Mammary epithelial cell (primary cell): ENCODE measurements at regions of chr13 and their contacts with region 1.

Region 1: DNA sequence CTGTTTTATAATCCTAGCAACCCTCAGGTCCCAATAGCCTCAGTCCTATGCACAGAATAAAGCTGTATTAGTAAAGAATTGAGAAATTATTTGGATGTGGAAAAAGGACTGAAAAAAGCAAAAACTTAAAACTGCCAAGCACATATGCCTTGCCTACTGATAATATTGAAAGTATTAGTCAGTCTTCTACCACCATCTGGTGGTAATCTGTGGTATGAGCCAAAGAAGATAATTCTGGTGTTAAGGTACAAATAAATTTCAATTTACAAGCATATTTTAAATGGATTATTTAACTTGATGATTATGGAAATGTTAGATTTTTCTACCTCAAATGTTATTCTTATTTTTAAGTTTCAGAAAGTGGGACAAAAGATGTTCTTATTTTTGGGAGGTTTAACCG is 460.3 kb upstream of the KLHL1 start:
- DNase-seq: peak; percentile 11
- H3K4me3 ChIP-seq: no peak overlapping the region
- H3K27ac ChIP-seq: no peak overlapping the region
- H3K4me1 ChIP-seq: no peaks in the 10 kb centered on the region
- H3K27me3 ChIP-seq: no peaks in the 10 kb centered on the region
- CTCF ChIP-seq: peak; percentile 67 to 68

Region 2: GRCh38 chr13:69579351-69579750 is 989.2 kb before region 1 on chr13:
- CTCF ChIA-PET with region 1: no interaction called
- dilution Hi-C with region 1: no loop called
- in situ Hi-C with region 1: no loop called
- intact Hi-C with region 1: loop called (anchors 5 kb)
- DNase-seq: peak; percentile 3
- H3K4me3 ChIP-seq: no peak overlapping the region
- H3K27ac ChIP-seq: peak overlapping the region; percentile 47
- H3K4me1 ChIP-seq: peaks cover 4% of the 10 kb centered on the region
- H3K27me3 ChIP-seq: no peaks in the 10 kb centered on the region
- CTCF ChIP-seq: peak; percentile 9 to 42

Region 3: GRCh38 chr13:70098669-70099068 is 469.9 kb before region 1 on chr13:
- CTCF ChIA-PET with region 1: no interaction called
- dilution Hi-C with region 1: no loop called
- in situ Hi-C with region 1: no loop called
- intact Hi-C with region 1: loop called (anchors 5 kb)
- DNase-seq: no peak
- H3K4me3 ChIP-seq: no peak overlapping the region
- H3K27ac ChIP-seq: no peak overlapping the region
- H3K4me1 ChIP-seq: no peaks in the 10 kb centered on the region
- H3K27me3 ChIP-seq: peaks cover 3% of the 10 kb centered on the region
- CTCF ChIP-seq: peak; percentile 32 to 56

Region 4: DNA sequence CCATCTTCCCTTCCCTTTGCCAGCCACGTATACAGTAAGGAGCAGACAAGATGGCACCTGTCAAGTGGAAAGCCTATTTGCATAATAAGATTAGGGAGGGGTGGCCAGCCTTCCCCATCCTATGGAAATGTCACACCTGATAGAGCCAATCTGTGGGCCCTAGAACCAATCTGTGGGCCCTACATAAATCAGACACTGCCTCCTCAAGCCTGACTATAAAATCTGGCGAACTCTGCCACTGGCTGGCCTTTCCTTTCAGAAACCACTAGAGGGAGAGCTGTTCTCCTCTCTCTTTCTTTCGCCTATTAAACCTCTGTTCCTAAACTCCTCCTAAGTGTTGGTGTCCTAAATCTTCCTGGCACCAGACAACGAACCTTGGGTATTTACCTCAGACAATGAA is 228.8 kb before region 1 on chr13:
- CTCF ChIA-PET with region 1: no interaction called
- dilution Hi-C with region 1: no loop called
- in situ Hi-C with region 1: loop called in 1 of 2 experiments (anchors 25 kb)
- intact Hi-C with region 1: loop called (anchors 2 kb)
- DNase-seq: peak; percentile 2
- H3K4me3 ChIP-seq: no peak overlapping the region
- H3K27ac ChIP-seq: no peak overlapping the region
- H3K4me1 ChIP-seq: no peaks in the 10 kb centered on the region
- H3K27me3 ChIP-seq: no peaks in the 10 kb centered on the region
- CTCF ChIP-seq: peak; percentile 61 to 75

Region 5: DNA sequence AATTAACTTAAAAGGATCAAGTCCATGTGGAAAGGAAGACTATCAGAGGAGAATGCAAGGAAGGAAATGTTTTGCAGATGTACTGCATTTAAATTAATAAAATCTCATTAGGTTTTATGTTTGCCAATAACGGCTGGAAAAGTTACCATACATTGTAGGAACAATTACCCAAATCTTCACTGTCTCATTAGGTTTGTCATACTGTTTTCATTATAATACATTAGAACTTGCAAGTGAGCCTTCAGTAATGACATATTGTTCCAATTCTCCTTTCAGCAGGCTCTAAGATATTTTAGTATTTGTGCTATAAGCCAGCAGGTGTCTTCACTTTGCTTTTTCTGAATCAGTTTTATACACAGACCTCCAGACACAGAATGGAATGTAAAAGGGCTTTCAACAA is 201.2 kb after region 1 on chr13:
- CTCF ChIA-PET with region 1: no interaction called
- dilution Hi-C with region 1: no loop called
- in situ Hi-C with region 1: no loop called
- intact Hi-C with region 1: no loop called
- DNase-seq: no peak
- H3K4me3 ChIP-seq: no peak overlapping the region
- H3K27ac ChIP-seq: no peak overlapping the region
- H3K4me1 ChIP-seq: no peaks in the 10 kb centered on the region
- H3K27me3 ChIP-seq: no peaks in the 10 kb centered on the region
- CTCF ChIP-seq: no peak